ENCODE measurements at regions of chrX and their contacts with region 1.

Region 1: DNA sequence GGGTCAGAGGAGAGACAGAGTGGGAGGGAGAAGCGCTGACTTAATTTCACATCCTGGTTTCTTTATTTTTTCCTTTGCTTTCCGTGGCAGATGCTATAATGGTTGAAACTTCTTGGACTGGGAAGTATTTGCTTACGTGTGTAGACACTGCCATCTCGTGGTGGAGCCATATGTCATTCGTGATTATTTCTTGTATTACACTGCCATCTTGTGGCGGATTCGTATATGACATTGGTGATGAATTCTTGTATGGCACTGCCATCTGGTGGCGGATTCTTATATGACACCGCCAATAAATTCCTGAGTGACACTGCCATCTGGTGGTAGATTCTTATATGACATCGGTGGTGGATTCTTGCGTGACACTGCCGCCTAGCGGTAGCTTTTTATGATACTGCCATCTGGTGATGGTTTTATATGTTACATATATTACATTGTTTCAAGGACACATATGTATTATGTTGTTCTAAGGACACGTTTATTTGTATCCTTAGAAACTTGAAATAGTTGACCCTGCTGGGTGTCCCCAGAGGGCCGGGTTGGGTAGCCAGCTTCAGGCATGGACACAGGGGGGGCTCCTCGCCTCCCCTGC is 37.3 kb upstream of the CLCN4 start:
- DNase-seq: peak; percentile 80
- H3K4me3 ChIP-seq: no peak overlapping the region
- H3K27ac ChIP-seq: peak overlapping the region in 3 of 4 donors; percentile 29 to 42 (median 36)
- H3K4me1 ChIP-seq: no peaks in the 10 kb centered on the region
- H3K27me3 ChIP-seq: no peaks in the 10 kb centered on the region
- CTCF ChIP-seq: peak; percentile 97 to 100 (median 100)
- EP300 ChIP-seq: no peak
- POLR2A ChIP-seq: no peak

Region 2: GRCh38 chrX:9995855-9996339 is 123.6 kb before region 1 on chrX:
- in situ Hi-C with region 1: loop called (anchors 5 to 10 kb)
- intact Hi-C with region 1: loop called (anchors 1 kb)
- DNase-seq: peak; percentile 85
- H3K4me3 ChIP-seq: no peak overlapping the region
- H3K27ac ChIP-seq: no peak overlapping the region
- H3K4me1 ChIP-seq: no peaks in the 10 kb centered on the region
- H3K27me3 ChIP-seq: no peaks in the 10 kb centered on the region
- CTCF ChIP-seq: peak; percentile 85 to 99 (median 96)
- EP300 ChIP-seq: no peak
- POLR2A ChIP-seq: no peak

Region 3: DNA sequence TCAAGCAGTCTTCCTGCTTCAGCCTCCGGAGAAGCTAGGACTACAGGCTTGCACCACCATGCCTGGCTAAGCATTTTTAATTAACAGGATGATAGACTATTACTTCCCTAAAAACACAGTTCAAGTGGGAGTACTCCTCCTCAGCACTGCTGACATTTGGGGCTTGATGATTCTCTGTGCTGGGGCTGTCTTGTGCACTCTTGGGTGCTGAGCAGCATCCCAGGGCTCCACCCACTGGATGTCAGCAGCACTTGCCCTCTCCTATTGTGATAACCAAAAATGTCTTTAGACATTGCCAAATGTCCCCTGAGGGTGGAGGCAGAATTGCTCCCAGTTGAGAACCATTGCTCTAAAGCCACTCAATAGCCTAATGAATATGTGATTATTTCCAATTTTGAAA is 97.7 kb after region 1 on chrX:
- in situ Hi-C with region 1: no loop called
- intact Hi-C with region 1: no loop called
- DNase-seq: no peak
- H3K4me3 ChIP-seq: no peak overlapping the region
- H3K27ac ChIP-seq: no peak overlapping the region
- H3K4me1 ChIP-seq: no peaks in the 10 kb centered on the region
- H3K27me3 ChIP-seq: no peaks in the 10 kb centered on the region
- CTCF ChIP-seq: no peak
- EP300 ChIP-seq: no peak
- POLR2A ChIP-seq: no peak

Measured in transverse colon (tissue), 4 donors.